ENCODE measurements at regions of chr7 and their contacts with region 1.

Region 1: GRCh38 chr7:32427769-32428291 is 62.4 kb downstream of the LSM5 start:
- DNase-seq: no peak
- ATAC-seq: peak; percentile 58
- H3K4me3 ChIP-seq: no peak overlapping the region
- H3K27ac ChIP-seq: no peak overlapping the region
- H3K4me1 ChIP-seq: no peaks in the 10 kb centered on the region
- H3K27me3 ChIP-seq: no peaks in the 10 kb centered on the region
- CTCF ChIP-seq: 0 out of 6 replicates have a peak, but pooled peaks of 1 of the 3 experiments have one; percentile 8
- EP300 ChIP-seq: no peak
- POLR2A ChIP-seq: no peak
- RAD21 ChIP-seq: no peak

Region 2: GRCh38 chr7:32335107-32335506 is 92.7 kb before region 1 on chr7:
- CTCF ChIA-PET with region 1: no interaction called
- POLR2A ChIA-PET with region 1: no interaction called
- RAD21 ChIA-PET with region 1: no interaction called
- SMC1A ChIA-PET with region 1: no interaction called
- in situ Hi-C with region 1: no loop called
- intact Hi-C with region 1: no loop called
- DNase-seq: no peak
- ATAC-seq: no peak
- H3K4me3 ChIP-seq: no peak overlapping the region
- H3K27ac ChIP-seq: no peak overlapping the region
- H3K4me1 ChIP-seq: no peaks in the 10 kb centered on the region
- H3K27me3 ChIP-seq: no peaks in the 10 kb centered on the region
- CTCF ChIP-seq: no peak
- EP300 ChIP-seq: no peak
- POLR2A ChIP-seq: no peak
- RAD21 ChIP-seq: no peak

Region 3: GRCh38 chr7:32381024-32381601 is 46.7 kb before region 1 on chr7:
- CTCF ChIA-PET with region 1: no interaction called
- POLR2A ChIA-PET with region 1: no interaction called
- RAD21 ChIA-PET with region 1: no interaction called
- SMC1A ChIA-PET with region 1: no interaction called
- in situ Hi-C with region 1: no loop called
- intact Hi-C with region 1: no loop called
- DNase-seq: no peak
- ATAC-seq: peak; percentile 42; the same call in 1 of the 3 replicates
- H3K4me3 ChIP-seq: no peak overlapping the region
- H3K27ac ChIP-seq: no peak overlapping the region
- H3K4me1 ChIP-seq: no peaks in the 10 kb centered on the region
- H3K27me3 ChIP-seq: peaks cover 0 to 3% of the 10 kb centered on the region in 2 experiments; a peak in 1 of 4 replicates
- CTCF ChIP-seq: no peak
- EP300 ChIP-seq: no peak
- POLR2A ChIP-seq: no peak
- RAD21 ChIP-seq: no peak

Region 4: GRCh38 chr7:32410545-32410944 is 17.3 kb before region 1 on chr7:
- CTCF ChIA-PET with region 1: no interaction called
- POLR2A ChIA-PET with region 1: no interaction called
- RAD21 ChIA-PET with region 1: no interaction called
- SMC1A ChIA-PET with region 1: interaction called, 11 read pairs
- in situ Hi-C with region 1: no loop called
- intact Hi-C with region 1: no loop called
- DNase-seq: no peak
- ATAC-seq: no peak
- H3K4me3 ChIP-seq: no peak overlapping the region
- H3K27ac ChIP-seq: no peak overlapping the region
- H3K4me1 ChIP-seq: no peaks in the 10 kb centered on the region
- H3K27me3 ChIP-seq: no peaks in the 10 kb centered on the region
- CTCF ChIP-seq: no peak
- EP300 ChIP-seq: no peak
- POLR2A ChIP-seq: no peak
- RAD21 ChIP-seq: no peak

Region 5: DNA sequence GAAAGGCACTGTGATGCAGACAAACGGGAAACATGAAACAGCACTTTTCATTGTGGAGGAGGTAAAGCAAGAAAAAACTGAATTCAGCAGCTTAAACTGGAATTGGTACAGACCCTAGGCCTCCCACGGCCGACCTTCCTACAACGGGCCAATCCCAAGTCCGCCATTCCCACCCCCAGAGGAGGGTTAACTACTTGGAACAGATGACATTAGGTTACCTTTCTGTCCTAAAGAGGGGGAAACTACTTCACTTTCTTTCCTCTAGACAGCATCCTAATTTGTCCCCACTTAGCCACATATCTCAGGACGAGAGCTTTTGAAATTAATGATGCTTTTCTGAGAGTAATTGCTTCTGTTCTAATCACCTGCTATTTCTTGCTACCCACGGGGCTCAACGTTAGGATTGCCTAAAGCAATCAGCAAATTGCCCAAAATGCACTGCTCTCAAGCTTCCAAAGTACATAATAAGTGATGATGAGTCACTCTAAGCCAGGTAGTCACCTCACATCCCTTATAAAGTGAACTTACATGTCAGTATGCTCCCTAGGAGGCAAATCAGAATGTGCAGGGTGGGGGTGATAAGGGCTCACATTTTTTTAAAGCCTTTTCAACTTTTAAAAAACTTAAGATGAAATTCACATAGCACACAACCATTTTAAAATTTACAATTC is 25.6 kb after region 1 on chr7:
- CTCF ChIA-PET with region 1: no interaction called
- POLR2A ChIA-PET with region 1: no interaction called
- RAD21 ChIA-PET with region 1: no interaction called
- SMC1A ChIA-PET with region 1: no interaction called
- in situ Hi-C with region 1: no loop called
- intact Hi-C with region 1: no loop called
- DNase-seq: no peak
- ATAC-seq: no peak
- H3K4me3 ChIP-seq: no peak overlapping the region
- H3K27ac ChIP-seq: no peak overlapping the region
- H3K4me1 ChIP-seq: no peaks in the 10 kb centered on the region
- H3K27me3 ChIP-seq: no peaks in the 10 kb centered on the region; a peak in 1 of 4 replicates
- CTCF ChIP-seq: no peak
- EP300 ChIP-seq: no peak
- POLR2A ChIP-seq: no peak
- RAD21 ChIP-seq: no peak

Region 6: GRCh38 chr7:32490127-32490822 is 62.4 kb after region 1 on chr7 and contains the start of gene LSM5:
- CTCF ChIA-PET with region 1: no interaction called
- POLR2A ChIA-PET with region 1: no interaction called
- RAD21 ChIA-PET with region 1: no interaction called
- SMC1A ChIA-PET with region 1: no interaction called
- in situ Hi-C with region 1: no loop called
- intact Hi-C with region 1: no loop called
- DNase-seq: peak; percentile 80
- ATAC-seq: peak; percentile 85
- H3K4me3 ChIP-seq: peak within 1 kb of the TSS; percentile 84
- H3K27ac ChIP-seq: peak within 1 kb of the TSS; percentile 85
- H3K4me1 ChIP-seq: no peaks in the 10 kb centered on the region
- H3K27me3 ChIP-seq: no peaks in the 10 kb centered on the region
- CTCF ChIP-seq: no peak
- EP300 ChIP-seq: no peak; a peak in 1 of 4 replicates
- POLR2A ChIP-seq: peak; percentile 93
- RAD21 ChIP-seq: no peak
- polyA plus RNA-seq, gene LSM5: 494 to 538 TPM

Measured in GM12878 (cell line).